Natural killer cell (primary cell): ENCODE measurements at regions of chr7 and their contacts with region 1.

Region 1: DNA sequence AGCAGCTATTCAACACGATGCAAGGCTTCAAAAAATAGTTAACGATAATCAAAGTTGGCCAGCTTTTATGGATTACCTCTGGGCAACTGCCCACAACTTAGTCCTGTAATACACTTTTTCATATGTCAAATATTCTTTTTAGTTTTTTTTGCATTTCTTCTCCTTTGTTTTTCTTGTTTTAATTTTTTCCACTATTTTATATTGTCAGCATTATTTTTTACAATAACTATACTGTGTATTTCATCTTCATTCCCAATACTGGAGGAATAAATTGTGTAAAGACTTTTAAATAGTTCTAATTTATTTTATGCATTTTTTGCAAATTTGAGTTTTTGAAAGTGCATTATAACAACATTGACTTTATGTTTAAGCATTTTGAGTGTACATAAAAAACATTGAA is 18.5 kb upstream of the CTAGE4 start:
- DNase-seq: no peak
- ATAC-seq: no peak
- H3K4me3 ChIP-seq: no peak overlapping the region
- H3K4me3 Mint-ChIP-seq: no peak overlapping the region
- H3K27ac ChIP-seq: no peak overlapping the region
- H3K27ac Mint-ChIP-seq: no peak overlapping the region
- H3K4me1 ChIP-seq: no peaks in the 10 kb centered on the region
- H3K4me1 Mint-ChIP-seq: no peaks in the 10 kb centered on the region
- H3K27me3 ChIP-seq: peaks cover 2% of the 10 kb centered on the region
- H3K27me3 Mint-ChIP-seq: peaks cover 11% of the 10 kb centered on the region in 2 donors
- CTCF ChIP-seq: no peak

Region 2: DNA sequence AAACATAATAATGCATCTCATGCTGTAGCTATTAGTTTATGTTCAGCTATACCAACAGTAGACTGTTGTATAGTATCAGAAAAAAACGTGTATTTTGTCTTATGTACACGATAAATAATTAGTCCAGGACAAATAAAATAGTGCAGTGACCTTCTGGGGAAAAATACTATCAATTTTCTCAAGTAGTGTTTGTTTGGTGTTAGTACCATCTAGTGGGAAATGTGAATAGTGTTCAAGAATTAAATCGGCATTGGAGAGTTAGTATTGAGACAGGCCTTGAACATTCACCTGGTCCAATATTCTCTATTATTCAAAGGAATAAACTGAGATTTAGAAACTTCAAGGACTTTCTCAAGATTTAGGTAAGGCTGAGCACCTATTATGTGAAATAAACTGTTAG is 137.7 kb before region 1 on chr7:
- intact Hi-C with region 1: no loop called
- DNase-seq: no peak
- ATAC-seq: no peak
- H3K4me3 ChIP-seq: no peak overlapping the region
- H3K4me3 Mint-ChIP-seq: no peak overlapping the region
- H3K27ac ChIP-seq: no peak overlapping the region
- H3K27ac Mint-ChIP-seq: no peak overlapping the region
- H3K4me1 ChIP-seq: no peaks in the 10 kb centered on the region
- H3K4me1 Mint-ChIP-seq: no peaks in the 10 kb centered on the region
- H3K27me3 ChIP-seq: no peaks in the 10 kb centered on the region
- H3K27me3 Mint-ChIP-seq: no peaks in the 10 kb centered on the region
- CTCF ChIP-seq: no peak

Region 3: GRCh38 chr7:144397086-144397485 is 232.3 kb after region 1 on chr7:
- intact Hi-C with region 1: loop called (anchors 5 kb)
- DNase-seq: no peak
- ATAC-seq: no peak
- H3K4me3 ChIP-seq: no peak overlapping the region
- H3K4me3 Mint-ChIP-seq: no peak overlapping the region
- H3K27ac ChIP-seq: no peak overlapping the region
- H3K27ac Mint-ChIP-seq: no peak overlapping the region
- H3K4me1 ChIP-seq: peaks cover under 1% of the 10 kb centered on the region
- H3K4me1 Mint-ChIP-seq: no peaks in the 10 kb centered on the region
- H3K27me3 ChIP-seq: no peaks in the 10 kb centered on the region
- H3K27me3 Mint-ChIP-seq: peaks cover 4 to 8% of the 10 kb centered on the region in 2 donors
- CTCF ChIP-seq: no peak